CD8-positive, alpha-beta T cell (primary cell): ENCODE measurements at regions of chr5 and their contacts with region 1.

Region 1: DNA sequence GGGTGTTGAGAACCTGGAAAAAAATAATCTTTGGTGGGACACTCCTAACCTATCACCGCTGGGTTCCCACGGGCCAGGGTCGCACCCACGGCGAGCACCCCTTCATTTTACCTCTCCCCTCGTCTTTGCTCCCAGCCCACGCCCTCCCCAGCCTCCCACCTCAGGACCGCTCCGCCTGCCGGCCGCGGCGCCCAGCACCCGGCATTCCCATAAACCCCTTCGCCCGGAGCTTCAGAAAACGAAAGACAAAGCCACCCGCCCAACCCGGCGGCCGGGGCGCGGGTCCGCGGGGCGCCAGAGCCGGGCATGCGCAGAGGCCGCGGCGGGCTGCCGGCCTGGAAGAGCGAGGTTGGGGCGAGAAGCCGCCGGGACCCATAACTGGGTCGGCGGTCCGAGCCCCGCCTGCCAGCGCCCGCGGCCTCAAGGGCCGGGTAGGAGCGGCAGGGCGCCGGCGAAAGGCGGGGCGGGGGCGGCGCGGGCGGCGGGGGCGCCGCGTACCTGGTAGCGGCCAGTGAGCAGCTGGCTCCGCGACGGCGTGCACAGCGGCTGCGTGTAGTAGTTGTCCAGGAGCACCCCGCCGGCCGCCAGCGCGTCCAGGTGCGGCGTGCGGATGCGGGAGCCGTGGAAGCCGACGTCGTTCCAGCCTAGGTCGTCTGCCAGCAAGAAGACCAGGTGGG is 533 bp downstream of the ARSB start:
- DNase-seq: peak; percentile 55 to 90 (median 75)
- ATAC-seq: peak; percentile 74
- H3K4me3 ChIP-seq: peak overlapping the region; percentile 54 to 68
- H3K4me3 Mint-ChIP-seq: peak overlapping the region; percentile 94
- H3K27ac ChIP-seq: peak overlapping the region; percentile 40 to 75
- H3K27ac Mint-ChIP-seq: peak overlapping the region; percentile 92
- H3K4me1 ChIP-seq: peaks cover 14% of the 10 kb centered on the region
- H3K4me1 Mint-ChIP-seq: peaks cover 28% of the 10 kb centered on the region
- H3K27me3 ChIP-seq: no peaks in the 10 kb centered on the region
- H3K27me3 Mint-ChIP-seq: no peaks in the 10 kb centered on the region
- CTCF ChIP-seq: no peak

Region 2: GRCh38 chr5:79093762-79094161 is 109.2 kb after region 1 on chr5:
- CTCF ChIA-PET with region 1: no interaction called
- POLR2A ChIA-PET with region 1: no interaction called
- intact Hi-C with region 1: no loop called
- DNase-seq: no peak
- ATAC-seq: no peak
- H3K4me3 ChIP-seq: no peak overlapping the region
- H3K4me3 Mint-ChIP-seq: no peak overlapping the region
- H3K27ac ChIP-seq: no peak overlapping the region
- H3K27ac Mint-ChIP-seq: no peak overlapping the region
- H3K4me1 ChIP-seq: no peaks in the 10 kb centered on the region
- H3K4me1 Mint-ChIP-seq: no peaks in the 10 kb centered on the region
- H3K27me3 ChIP-seq: no peaks in the 10 kb centered on the region
- H3K27me3 Mint-ChIP-seq: peaks cover 10% of the 10 kb centered on the region
- CTCF ChIP-seq: no peak

Region 3: DNA sequence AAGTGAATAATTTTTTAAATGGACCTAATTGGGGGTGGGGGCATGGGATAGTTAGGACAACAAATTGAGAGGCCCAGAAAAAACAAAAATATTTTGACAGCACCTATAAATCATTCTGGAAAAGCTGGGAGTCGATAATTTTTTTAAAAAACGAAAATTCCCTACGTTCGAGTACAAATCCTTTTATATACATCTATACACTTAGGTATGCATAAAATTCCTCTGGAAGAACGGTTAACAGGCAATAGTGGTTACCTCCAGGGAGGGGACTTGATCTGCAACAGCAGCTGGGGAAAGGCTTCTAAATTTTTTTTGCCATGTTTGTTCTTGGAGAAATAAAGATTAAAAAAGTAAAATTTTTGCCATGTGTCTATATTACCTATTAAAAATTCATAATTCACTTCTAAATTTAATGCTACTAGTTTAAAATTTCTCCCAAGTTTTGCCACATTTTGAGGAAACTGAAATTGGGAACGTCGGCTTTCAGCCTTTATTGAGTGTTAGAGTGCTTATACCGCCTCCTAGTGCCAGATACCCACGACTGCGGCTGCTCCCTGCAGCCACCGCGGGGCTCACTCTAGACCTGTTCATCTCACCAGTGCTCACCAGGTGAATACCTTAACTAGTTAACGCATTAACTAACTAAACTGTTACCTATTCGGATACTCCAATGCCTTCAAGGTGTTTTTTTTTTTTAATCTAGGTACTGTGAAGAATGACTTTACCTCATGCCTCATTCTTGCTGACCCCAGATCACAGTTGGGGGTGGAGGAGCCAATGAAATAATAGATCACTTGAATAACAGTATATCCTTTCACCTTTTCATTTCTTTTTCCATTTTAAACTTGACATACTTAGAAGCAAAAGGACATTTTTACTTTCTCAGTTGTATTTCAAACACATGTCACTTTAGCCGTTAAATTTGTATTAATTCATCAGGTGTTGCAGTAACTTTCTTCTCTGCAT is 125.2 kb after region 1 on chr5:
- CTCF ChIA-PET with region 1: interaction called, 4 read pairs
- POLR2A ChIA-PET with region 1: no interaction called
- intact Hi-C with region 1: loop called in 1 of 2 experiments (anchors 1 kb)
- DNase-seq: peak in 6 of 9 experiments; percentile 1 to 52 (median 32)
- ATAC-seq: no peak
- H3K4me3 ChIP-seq: no peak overlapping the region
- H3K4me3 Mint-ChIP-seq: no peak overlapping the region
- H3K27ac ChIP-seq: no peak overlapping the region
- H3K27ac Mint-ChIP-seq: no peak overlapping the region
- H3K4me1 ChIP-seq: no peaks in the 10 kb centered on the region
- H3K4me1 Mint-ChIP-seq: peaks cover 2% of the 10 kb centered on the region
- H3K27me3 ChIP-seq: peaks cover 0 to 8% of the 10 kb centered on the region in 2 experiments
- H3K27me3 Mint-ChIP-seq: peaks cover 40% of the 10 kb centered on the region
- CTCF ChIP-seq: peak; percentile 69

Region 4: DNA sequence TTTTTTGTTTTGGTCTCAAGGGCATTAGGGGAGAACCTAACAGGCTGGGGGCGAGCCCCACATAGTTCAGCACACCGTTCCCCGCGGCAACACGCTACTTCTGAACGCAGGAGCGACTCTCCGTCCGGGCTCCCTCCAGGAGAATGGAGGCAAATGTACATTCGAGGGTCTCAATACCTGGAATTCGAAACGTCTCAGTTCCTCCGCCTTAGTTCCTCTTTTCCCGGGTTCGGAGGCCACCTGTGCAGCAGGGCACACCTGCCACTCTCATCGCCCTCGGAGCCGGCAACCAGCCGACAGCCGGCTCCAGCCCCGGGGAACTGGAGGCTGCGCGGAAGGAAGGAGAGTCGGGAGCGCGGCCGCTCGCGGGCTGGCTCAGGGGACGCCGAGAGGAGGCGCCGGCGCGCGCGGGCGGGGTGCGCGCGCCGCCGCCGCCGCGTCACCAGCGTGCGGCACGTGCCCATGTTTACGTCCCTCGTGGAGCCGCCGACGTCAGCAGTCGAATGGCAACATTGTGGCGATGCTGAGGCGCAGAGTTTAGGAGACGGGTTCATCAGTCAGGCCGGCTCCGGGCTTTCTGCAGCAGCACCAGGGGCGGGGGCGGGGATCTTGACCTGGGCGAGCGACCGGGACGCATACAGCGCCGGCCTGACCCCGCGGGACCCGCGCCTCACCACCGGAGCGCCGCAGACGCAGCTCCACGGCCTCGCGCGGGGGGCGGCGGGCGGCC is 251.2 kb after region 1 on chr5 and contains the start of gene JMY:
- CTCF ChIA-PET with region 1: no interaction called
- POLR2A ChIA-PET with region 1: interaction called, 11 read pairs
- intact Hi-C with region 1: loop called (anchors 1 to 2 kb)
- DNase-seq: peak; percentile 72 to 94 (median 85)
- ATAC-seq: peak; percentile 86
- H3K4me3 ChIP-seq: peak within 1 kb of the TSS; percentile 79 to 81
- H3K4me3 Mint-ChIP-seq: peak within 1 kb of the TSS; percentile 97
- H3K27ac ChIP-seq: peak within 1 kb of the TSS; percentile 91 to 98
- H3K27ac Mint-ChIP-seq: peak within 1 kb of the TSS; percentile 96
- H3K4me1 ChIP-seq: peaks cover 28% of the 10 kb centered on the region
- H3K4me1 Mint-ChIP-seq: peaks cover 34% of the 10 kb centered on the region
- H3K27me3 ChIP-seq: no peaks in the 10 kb centered on the region
- H3K27me3 Mint-ChIP-seq: no peaks in the 10 kb centered on the region
- CTCF ChIP-seq: no peak
- total RNA-seq, gene JMY: 104 TPM